AG04450 (cell line): ENCODE measurements at regions of chr15 and their contacts with region 1.

Region 1: GRCh38 chr15:31440754-31441311 is 114.2 kb downstream of the KLF13 start:
- DNase-seq: no peak
- H3K4me3 ChIP-seq: peak overlapping the region; percentile 54
- H3K27ac ChIP-seq: no peak overlapping the region
- H3K27me3 ChIP-seq: no peaks in the 10 kb centered on the region
- CTCF ChIP-seq: no peak

Region 2: DNA sequence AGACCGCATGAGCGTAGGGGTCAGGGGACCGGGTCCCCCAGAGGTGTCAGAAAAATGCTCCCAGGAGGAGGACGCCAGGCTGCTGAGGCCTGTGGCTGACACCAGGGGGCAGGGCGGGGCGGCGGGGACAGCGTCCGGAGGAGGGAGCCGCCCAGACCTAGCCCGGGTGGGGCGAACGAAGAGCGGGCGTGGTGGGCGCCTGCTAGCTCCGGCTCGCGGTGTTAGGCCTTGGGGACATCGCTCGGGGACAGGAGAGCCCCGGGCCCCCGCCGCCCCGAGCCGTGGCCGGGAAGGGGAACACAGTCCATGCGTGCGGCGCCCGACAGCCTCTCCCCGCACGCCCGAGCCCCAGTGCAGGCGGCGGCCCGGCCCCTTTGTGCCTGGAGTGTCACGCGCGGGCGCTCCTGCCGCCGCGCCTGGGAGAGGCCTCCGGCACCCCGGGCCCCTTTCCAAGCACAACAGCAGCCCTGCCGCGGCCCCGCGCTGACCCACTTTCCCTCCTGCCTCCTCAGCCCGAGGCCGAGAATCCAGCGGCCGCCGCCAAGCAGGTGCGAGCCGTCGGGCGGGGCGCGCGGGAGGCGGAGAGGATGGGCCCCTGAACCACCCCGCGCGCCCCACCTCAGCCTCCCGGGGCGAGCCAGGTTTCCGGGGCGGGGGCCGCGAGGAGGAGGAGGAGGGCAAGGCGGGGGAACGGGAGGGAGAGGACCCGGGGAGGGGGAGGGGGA is 225.2 kb before region 1 on chr15:
- CTCF ChIA-PET with region 1: interaction called, 11 read pairs
- POLR2A ChIA-PET with region 1: no interaction called
- DNase-seq: no peak
- H3K4me3 ChIP-seq: peak overlapping the region; percentile 46
- H3K27ac ChIP-seq: no peak overlapping the region
- H3K27me3 ChIP-seq: peaks cover 18% of the 10 kb centered on the region
- CTCF ChIP-seq: peak; percentile 72

Region 3: GRCh38 chr15:31374489-31374888 is 66.3 kb before region 1 on chr15:
- CTCF ChIA-PET with region 1: no interaction called
- POLR2A ChIA-PET with region 1: interaction called, 11 read pairs
- DNase-seq: no peak
- H3K4me3 ChIP-seq: no peak overlapping the region
- H3K27ac ChIP-seq: no peak overlapping the region
- H3K27me3 ChIP-seq: no peaks in the 10 kb centered on the region
- CTCF ChIP-seq: no peak